GM12878 (cell line): ENCODE measurements at regions of chr16 and their contacts with region 1.

Region 1: GRCh38 chr16:87877938-87878507 is 8.7 kb upstream of the SLC7A5 start:
- DNase-seq: no peak
- ATAC-seq: peak; percentile 57
- H3K4me3 ChIP-seq: no peak overlapping the region
- H3K27ac ChIP-seq: no peak overlapping the region
- H3K4me1 ChIP-seq: peaks cover 6% of the 10 kb centered on the region
- H3K27me3 ChIP-seq: no peaks in the 10 kb centered on the region; a peak in 1 of 4 replicates
- CTCF ChIP-seq: peak; percentile 29 to 41 (median 34); a peak in 4 of 6 replicates
- EP300 ChIP-seq: no peak
- POLR2A ChIP-seq: no peak
- RAD21 ChIP-seq: peak; percentile 44

Region 2: DNA sequence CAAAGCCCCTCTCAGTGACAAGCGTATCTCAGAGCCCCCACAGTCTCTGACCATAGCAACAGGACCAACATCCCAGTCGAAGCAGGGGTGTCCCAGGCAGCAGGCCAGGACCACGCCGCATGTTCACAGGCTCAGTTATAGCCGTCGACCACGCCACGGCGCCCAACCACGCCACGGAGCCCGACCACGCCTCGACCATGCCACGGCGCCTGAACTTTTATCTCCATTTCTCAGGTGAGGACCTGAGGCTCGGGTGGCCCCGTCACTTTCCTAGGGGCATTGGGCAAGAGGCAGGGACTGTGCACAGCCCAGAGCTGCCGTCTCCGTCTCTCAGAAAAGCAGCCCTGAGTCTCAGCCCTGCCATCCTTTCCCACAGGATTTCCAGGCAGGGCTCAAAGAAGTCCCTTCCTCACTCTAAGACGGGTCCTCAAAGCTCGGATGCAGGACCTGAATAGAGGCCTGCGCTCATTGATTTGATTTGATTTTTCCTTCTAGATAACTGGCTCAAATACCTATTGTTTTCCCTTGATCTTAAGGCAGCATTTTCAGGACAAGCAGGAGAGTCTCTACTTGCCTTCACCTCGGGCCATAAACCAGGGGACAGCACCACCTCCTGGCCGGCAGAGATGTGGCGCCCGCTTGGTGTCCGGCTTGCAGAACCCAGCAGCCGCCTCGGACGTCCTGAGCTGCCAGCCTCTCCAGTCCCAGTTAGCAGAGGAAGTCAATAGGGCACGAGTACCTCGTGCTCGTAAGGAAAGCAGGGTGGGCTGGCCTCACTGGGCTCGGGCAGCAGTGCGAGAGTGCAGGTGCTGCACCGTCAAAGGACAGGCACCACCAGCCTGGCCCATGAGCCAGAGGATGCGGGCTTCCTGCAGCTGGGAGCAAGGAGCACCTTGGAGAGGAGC is 599.6 kb before region 1 on chr16:
- CTCF ChIA-PET with region 1: no interaction called
- POLR2A ChIA-PET with region 1: no interaction called
- RAD21 ChIA-PET with region 1: no interaction called
- SMC1A ChIA-PET with region 1: no interaction called
- in situ Hi-C with region 1: no loop called
- intact Hi-C with region 1: no loop called
- DNase-seq: no peak
- ATAC-seq: peak; percentile 97
- H3K4me3 ChIP-seq: no peak overlapping the region
- H3K27ac ChIP-seq: no peak overlapping the region
- H3K4me1 ChIP-seq: no peaks in the 10 kb centered on the region
- H3K27me3 ChIP-seq: no peaks in the 10 kb centered on the region
- CTCF ChIP-seq: peak; percentile 77 to 84 (median 82)
- EP300 ChIP-seq: no peak
- POLR2A ChIP-seq: no peak
- RAD21 ChIP-seq: peak; percentile 69

Region 3: DNA sequence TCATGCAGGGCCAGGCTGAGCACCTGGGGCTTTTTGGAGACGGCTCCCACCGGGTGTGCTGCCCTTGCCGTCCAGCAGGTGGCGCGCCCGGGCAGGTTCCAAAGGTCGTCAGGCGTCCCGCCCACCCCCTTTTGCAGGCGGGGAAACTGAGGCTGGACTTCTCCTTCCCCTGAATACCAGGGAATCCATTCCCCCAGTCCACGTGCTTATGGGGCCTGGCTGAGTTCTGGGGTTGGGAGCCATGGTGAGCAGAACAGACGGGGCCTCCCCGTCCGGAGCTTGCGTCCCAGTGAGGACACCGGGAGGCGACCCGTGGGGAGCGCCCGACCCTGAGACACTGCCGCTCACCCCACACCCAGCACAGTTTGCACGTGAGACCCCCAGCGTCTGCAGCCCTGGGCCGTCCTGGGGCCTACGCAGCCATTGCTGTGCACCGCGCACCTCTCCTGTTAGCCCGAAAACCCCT is 327.5 kb before region 1 on chr16:
- CTCF ChIA-PET with region 1: no interaction called
- POLR2A ChIA-PET with region 1: no interaction called
- RAD21 ChIA-PET with region 1: no interaction called
- SMC1A ChIA-PET with region 1: no interaction called
- in situ Hi-C with region 1: loop called (anchors 10 kb)
- intact Hi-C with region 1: loop called (anchors 5 kb)
- DNase-seq: no peak
- ATAC-seq: peak; percentile 71
- H3K4me3 ChIP-seq: no peak overlapping the region
- H3K27ac ChIP-seq: no peak overlapping the region
- H3K4me1 ChIP-seq: no peaks in the 10 kb centered on the region
- H3K27me3 ChIP-seq: no peaks in the 10 kb centered on the region
- CTCF ChIP-seq: peak; percentile 72 to 92 (median 84)
- EP300 ChIP-seq: no peak
- POLR2A ChIP-seq: no peak
- RAD21 ChIP-seq: peak; percentile 59

Region 4: DNA sequence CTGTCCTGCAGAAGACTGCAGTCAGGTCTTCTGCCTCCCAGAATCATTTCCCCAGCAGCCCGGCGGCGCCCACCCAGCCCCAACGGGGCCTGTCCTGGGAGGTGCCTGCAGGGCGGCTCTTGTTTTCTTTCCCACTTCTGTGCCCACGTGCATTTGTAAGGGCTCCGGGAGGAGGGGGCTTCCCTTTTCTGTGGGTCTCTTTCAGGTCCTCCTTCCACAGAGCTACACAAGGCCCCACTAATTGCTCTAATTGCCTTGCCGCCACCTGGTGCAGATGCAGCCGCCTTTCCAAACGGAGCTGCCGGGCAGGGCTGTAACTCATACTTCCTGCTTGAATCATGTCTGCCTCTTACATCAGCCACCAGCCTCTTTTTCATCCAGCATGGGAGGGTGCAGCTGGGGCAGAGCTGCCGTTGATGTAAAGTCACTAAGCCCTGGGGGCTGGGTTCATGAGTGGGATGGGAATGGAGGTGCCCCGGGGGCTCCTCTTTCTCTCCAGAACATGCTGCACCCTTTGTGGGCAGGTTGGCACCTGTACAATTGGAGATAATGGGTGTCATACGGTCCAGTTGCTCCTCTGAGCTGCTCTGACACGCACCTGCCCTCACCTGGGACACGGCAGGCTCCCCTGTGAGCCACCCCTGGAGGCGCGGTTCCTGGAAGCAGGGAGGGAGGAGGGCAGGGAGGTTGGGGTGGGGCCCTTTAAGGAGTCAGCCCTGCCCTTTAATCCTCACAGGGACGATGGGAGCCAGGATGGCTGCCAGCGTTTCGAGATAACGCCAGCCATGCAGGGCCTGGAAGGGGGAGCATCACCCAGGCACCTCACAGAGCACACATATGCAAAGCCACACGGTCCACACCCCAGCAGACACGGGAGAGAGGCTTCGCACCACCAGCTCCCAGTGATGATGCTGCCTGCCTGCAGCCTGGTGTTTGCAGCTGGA is 71.1 kb before region 1 on chr16:
- CTCF ChIA-PET with region 1: interaction called, 4 read pairs
- POLR2A ChIA-PET with region 1: interaction called, 3 read pairs
- RAD21 ChIA-PET with region 1: interaction called, 9 read pairs
- SMC1A ChIA-PET with region 1: interaction called, 16 read pairs
- in situ Hi-C with region 1: no loop called
- intact Hi-C with region 1: no loop called
- DNase-seq: no peak
- ATAC-seq: peak; percentile 17
- H3K4me3 ChIP-seq: peak overlapping the region; percentile 24; the same call in 1 of the 2 replicates
- H3K27ac ChIP-seq: peak overlapping the region; percentile 78
- H3K4me1 ChIP-seq: peaks cover 58% of the 10 kb centered on the region
- H3K27me3 ChIP-seq: no peaks in the 10 kb centered on the region
- CTCF ChIP-seq: no peak
- EP300 ChIP-seq: no peak
- POLR2A ChIP-seq: peak; percentile 22
- RAD21 ChIP-seq: no peak

Region 5: DNA sequence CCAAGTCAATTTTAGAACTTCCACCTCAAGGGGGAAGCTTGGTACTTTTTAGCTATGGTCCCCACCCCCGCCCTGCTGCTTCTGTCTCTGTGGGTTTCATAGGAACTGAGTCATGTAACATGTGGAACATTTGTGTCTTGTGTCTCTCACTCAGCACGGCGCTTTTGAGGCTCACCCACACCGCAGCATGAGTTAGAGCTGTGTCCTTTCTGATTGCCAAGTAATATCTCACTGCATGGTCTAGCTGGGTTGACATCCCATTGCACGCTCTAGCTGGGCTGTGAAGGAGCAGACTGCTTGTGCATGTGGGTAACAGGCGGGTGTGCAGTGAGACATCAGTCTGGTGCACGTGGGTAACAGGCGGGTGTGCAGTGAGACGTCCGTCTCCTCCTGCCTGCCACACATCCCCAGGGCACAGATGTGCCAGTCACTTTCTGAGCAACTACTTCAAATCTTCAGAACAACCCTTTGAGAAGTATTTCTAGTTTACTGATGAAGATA is 17.7 kb after region 1 on chr16:
- CTCF ChIA-PET with region 1: interaction called, 29 read pairs
- POLR2A ChIA-PET with region 1: interaction called, 6 read pairs
- RAD21 ChIA-PET with region 1: interaction called, 13 read pairs
- SMC1A ChIA-PET with region 1: interaction called, 20 read pairs
- in situ Hi-C with region 1: no loop called
- intact Hi-C with region 1: no loop called
- DNase-seq: peak; percentile 67
- ATAC-seq: peak; percentile 94
- H3K4me3 ChIP-seq: no peak overlapping the region
- H3K27ac ChIP-seq: peak overlapping the region; percentile 31; the same call in 1 of the 2 replicates
- H3K4me1 ChIP-seq: peaks cover 24% of the 10 kb centered on the region
- H3K27me3 ChIP-seq: no peaks in the 10 kb centered on the region
- CTCF ChIP-seq: no peak
- EP300 ChIP-seq: peak in 1 of 2 experiments; percentile 57; a peak in 1 of 4 replicates
- POLR2A ChIP-seq: peak; percentile 20; the same call in 1 of the 2 replicates
- RAD21 ChIP-seq: no peak

Region 6: DNA sequence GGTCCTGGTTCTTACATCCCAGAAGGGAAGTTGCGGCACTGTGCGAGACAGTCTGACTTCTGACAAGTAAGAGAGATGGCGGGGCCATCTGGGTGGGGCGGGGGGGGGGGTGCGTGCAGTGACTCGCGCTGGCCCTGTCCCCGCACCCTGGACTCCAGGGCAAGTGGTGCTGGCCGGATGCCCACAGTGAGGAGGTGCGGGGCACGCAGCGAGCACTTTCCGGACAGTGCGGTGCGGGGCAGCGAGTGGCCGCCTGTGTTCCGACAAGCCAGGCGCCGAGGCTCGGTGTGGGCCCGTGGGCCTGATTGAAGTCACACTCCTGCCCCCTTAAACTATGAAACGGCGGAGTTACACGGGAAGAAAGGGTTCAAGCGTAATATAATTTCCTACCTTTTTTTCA is 179.6 kb after region 1 on chr16:
- CTCF ChIA-PET with region 1: no interaction called
- POLR2A ChIA-PET with region 1: no interaction called
- RAD21 ChIA-PET with region 1: no interaction called
- SMC1A ChIA-PET with region 1: no interaction called
- in situ Hi-C with region 1: no loop called
- intact Hi-C with region 1: no loop called
- DNase-seq: no peak
- ATAC-seq: no peak
- H3K4me3 ChIP-seq: no peak overlapping the region
- H3K27ac ChIP-seq: no peak overlapping the region
- H3K4me1 ChIP-seq: no peaks in the 10 kb centered on the region
- H3K27me3 ChIP-seq: no peaks in the 10 kb centered on the region
- CTCF ChIP-seq: no peak
- EP300 ChIP-seq: no peak
- POLR2A ChIP-seq: no peak
- RAD21 ChIP-seq: no peak